Caco-2 (cell line): ENCODE measurements at regions of chr21 and their contacts with region 1.

Region 1: DNA sequence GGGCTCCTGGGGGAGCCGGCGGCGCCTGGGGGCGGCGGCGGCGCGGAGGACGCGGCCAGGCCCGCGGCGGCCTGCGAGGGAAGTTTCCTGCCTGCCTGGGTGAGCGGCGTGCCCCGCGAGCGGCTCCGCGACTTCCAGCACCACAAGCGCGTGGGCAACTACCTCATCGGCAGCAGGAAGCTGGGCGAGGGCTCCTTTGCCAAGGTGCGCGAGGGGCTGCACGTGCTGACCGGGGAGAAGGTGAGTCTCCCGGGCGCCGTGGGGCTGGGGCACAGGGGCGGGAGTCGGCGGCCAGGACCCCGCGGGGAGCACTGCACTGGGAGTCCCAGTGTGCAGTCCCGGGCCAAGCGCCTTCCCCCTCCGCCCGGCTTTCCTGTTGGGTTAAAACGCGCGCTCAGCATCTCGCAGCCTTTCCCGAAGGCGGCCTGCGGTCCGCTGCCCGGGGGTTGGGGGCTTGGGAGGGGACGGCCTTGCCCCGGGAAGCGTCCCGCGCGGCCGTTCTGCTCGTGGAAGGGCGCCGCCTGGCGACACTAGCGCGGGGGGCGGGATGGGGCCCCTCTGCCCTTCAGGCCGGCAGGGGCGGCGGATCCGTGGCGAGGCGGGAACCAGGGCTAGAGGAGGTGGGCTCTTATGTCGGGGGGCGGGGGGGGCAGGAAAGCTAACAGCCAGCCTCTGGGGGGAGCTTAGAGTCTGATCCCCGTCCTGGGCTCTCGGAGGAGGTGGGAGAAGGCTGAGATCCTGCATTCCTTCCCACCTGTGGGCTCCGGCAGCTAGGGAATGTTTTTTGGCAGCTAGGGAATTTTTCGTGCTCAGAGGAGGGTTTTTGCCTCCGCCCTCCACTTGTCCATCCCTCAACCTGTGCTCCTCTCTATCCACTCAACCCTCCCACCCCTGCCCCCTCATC is 1.1 kb downstream of the HUNK start:
- DNase-seq: peak; percentile 58 to 80
- H3K4me3 ChIP-seq: peak overlapping the region; percentile 77
- H3K4me3 Mint-ChIP-seq: peak overlapping the region; percentile 86
- H3K27ac Mint-ChIP-seq: no peak overlapping the region
- H3K4me1 ChIP-seq: no peaks in the 10 kb centered on the region
- H3K4me1 Mint-ChIP-seq: peaks cover 12% of the 10 kb centered on the region
- H3K27me3 ChIP-seq: peaks cover 2% of the 10 kb centered on the region
- H3K27me3 Mint-ChIP-seq: peaks cover 4% of the 10 kb centered on the region
- CTCF ChIP-seq: peak; percentile 74 to 78

Region 2: DNA sequence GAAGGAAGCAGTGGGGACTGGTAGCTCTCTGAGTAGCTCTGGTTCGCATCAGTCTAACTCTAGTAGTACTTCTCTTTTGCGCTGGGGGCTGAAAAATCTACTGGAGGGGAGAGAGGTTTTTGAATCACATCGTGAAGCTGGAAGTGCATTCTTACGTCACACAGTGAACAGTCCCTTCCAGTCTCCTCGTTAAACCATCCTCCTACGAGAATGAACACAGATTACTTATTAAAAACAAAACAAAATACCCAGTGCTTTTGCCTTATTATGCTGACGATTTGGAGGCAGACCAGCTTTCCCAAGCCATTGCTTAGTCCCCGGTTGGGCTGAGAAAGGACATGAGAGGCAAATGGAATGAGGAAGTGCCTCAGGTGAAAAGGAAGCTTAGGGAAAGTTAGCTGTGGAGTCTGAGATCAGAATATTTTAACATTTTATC is 15.0 kb after region 1 on chr21:
- CTCF ChIA-PET with region 1: interaction called, 13 read pairs
- POLR2A ChIA-PET with region 1: no interaction called
- intact Hi-C with region 1: no loop called
- DNase-seq: peak; percentile 53 to 54
- H3K4me3 ChIP-seq: no peak overlapping the region
- H3K4me3 Mint-ChIP-seq: peak overlapping the region; percentile 60
- H3K27ac Mint-ChIP-seq: peak overlapping the region; percentile 92
- H3K4me1 ChIP-seq: peaks cover 17% of the 10 kb centered on the region
- H3K4me1 Mint-ChIP-seq: peaks cover 5% of the 10 kb centered on the region
- H3K27me3 ChIP-seq: no peaks in the 10 kb centered on the region
- H3K27me3 Mint-ChIP-seq: no peaks in the 10 kb centered on the region
- CTCF ChIP-seq: no peak

Region 3: GRCh38 chr21:31900121-31900895 is 26.4 kb after region 1 on chr21:
- CTCF ChIA-PET with region 1: interaction called, 6 read pairs
- POLR2A ChIA-PET with region 1: no interaction called
- intact Hi-C with region 1: loop called (anchors 2 kb)
- DNase-seq: peak; percentile 74 to 89
- H3K4me3 ChIP-seq: no peak overlapping the region
- H3K4me3 Mint-ChIP-seq: peak overlapping the region; percentile 45
- H3K27ac Mint-ChIP-seq: peak overlapping the region; percentile 86
- H3K4me1 ChIP-seq: peaks cover 38% of the 10 kb centered on the region
- H3K4me1 Mint-ChIP-seq: peaks cover 37% of the 10 kb centered on the region
- H3K27me3 ChIP-seq: no peaks in the 10 kb centered on the region
- H3K27me3 Mint-ChIP-seq: no peaks in the 10 kb centered on the region
- CTCF ChIP-seq: no peak

Region 4: GRCh38 chr21:31931644-31932639 is 58.0 kb after region 1 on chr21:
- CTCF ChIA-PET with region 1: no interaction called
- POLR2A ChIA-PET with region 1: no interaction called
- intact Hi-C with region 1: no loop called
- DNase-seq: peak in 1 of 2 experiments; percentile 49
- H3K4me3 ChIP-seq: no peak overlapping the region
- H3K4me3 Mint-ChIP-seq: peak overlapping the region; percentile 14
- H3K27ac Mint-ChIP-seq: peak overlapping the region; percentile 31
- H3K4me1 ChIP-seq: no peaks in the 10 kb centered on the region; the same call in 1 of the 2 replicates
- H3K4me1 Mint-ChIP-seq: peaks cover 17% of the 10 kb centered on the region
- H3K27me3 ChIP-seq: no peaks in the 10 kb centered on the region
- H3K27me3 Mint-ChIP-seq: no peaks in the 10 kb centered on the region
- CTCF ChIP-seq: no peak

Region 5: GRCh38 chr21:31945546-31945945 is 71.6 kb after region 1 on chr21:
- CTCF ChIA-PET with region 1: interaction called, 3 read pairs
- POLR2A ChIA-PET with region 1: no interaction called
- intact Hi-C with region 1: loop called (anchors 10 kb)
- DNase-seq: no peak
- H3K4me3 ChIP-seq: no peak overlapping the region
- H3K4me3 Mint-ChIP-seq: no peak overlapping the region
- H3K27ac Mint-ChIP-seq: no peak overlapping the region
- H3K4me1 ChIP-seq: peaks cover 27% of the 10 kb centered on the region
- H3K4me1 Mint-ChIP-seq: peaks cover 15% of the 10 kb centered on the region
- H3K27me3 ChIP-seq: no peaks in the 10 kb centered on the region
- H3K27me3 Mint-ChIP-seq: no peaks in the 10 kb centered on the region
- CTCF ChIP-seq: no peak